ENCODE measurements at regions of chr1 and their contacts with region 1.

Region 1: GRCh38 chr1:151611832-151612500 is at the start of gene SNX27:
- DNase-seq: peak; percentile 81
- ATAC-seq: peak; percentile 96
- H3K4me3 Mint-ChIP-seq: peak within 1 kb of the TSS; percentile 95
- H3K27ac Mint-ChIP-seq: peak within 1 kb of the TSS; percentile 79
- H3K4me1 Mint-ChIP-seq: peaks cover 32% of the 10 kb centered on the region
- H3K27me3 Mint-ChIP-seq: peaks cover 9% of the 10 kb centered on the region
- CTCF ChIP-seq: no peak
- total RNA-seq, gene SNX27: 22.2 and 27.6 TPM in 2 replicates

Region 2: DNA sequence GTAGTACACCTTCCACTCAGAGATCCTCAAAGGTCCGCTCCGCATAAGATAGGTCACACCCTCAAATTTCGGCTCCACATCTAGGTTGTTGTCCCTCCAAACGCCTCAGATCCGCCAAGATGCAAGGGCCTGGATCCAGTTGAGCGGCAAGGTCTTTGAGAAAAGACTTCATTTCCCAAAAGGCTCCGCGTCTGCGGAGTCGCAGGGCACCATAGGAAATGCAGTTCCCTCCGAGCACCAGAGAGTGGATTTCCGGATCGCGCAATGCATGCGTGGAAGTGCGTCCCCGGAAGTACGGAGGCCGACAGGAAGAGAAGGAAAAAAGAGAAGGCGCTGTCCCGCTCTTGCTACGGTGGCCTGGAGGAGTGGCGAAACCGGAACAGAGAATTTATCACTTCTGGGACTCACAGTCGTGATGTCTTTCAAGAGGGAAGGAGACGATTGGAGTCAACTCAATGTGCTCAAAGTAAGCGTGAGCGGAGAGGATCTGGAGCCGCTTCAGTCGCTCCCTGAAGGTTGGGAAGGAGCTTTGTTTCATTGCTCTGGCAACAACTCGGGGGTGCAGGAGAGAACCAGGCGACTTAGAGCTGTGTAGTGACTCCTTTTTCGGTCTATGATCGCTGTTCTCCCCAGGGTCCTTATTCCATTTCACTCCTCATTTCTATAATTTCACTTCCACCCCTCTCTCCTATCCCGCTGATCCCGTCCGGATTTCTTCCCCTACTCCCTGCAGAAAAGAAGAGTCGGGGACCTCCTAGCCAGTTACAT is 446.0 kb before region 1 on chr1 and contains the starts of genes LYSMD1 and SCNM1:
- CTCF ChIA-PET with region 1: no interaction called
- POLR2A ChIA-PET with region 1: no interaction called
- intact Hi-C with region 1: loop called (anchors 10 kb)
- DNase-seq: peak; percentile 87
- ATAC-seq: peak; percentile 96
- H3K4me3 Mint-ChIP-seq: peak within 1 kb of the TSS; percentile 92
- H3K27ac Mint-ChIP-seq: peak within 1 kb of the TSS; percentile 89
- H3K4me1 Mint-ChIP-seq: peaks cover 37% of the 10 kb centered on the region
- H3K27me3 Mint-ChIP-seq: no peaks in the 10 kb centered on the region
- CTCF ChIP-seq: no peak
- total RNA-seq, gene LYSMD1: 4.9 and 5.4 TPM in 2 replicates
- total RNA-seq, gene SCNM1: 52.8 and 58.2 TPM in 2 replicates

Region 3: GRCh38 chr1:151485685-151486255 is 126.2 kb before region 1 on chr1:
- CTCF ChIA-PET with region 1: no interaction called
- POLR2A ChIA-PET with region 1: no interaction called
- intact Hi-C with region 1: no loop called
- DNase-seq: no peak
- ATAC-seq: no peak
- H3K4me3 Mint-ChIP-seq: no peak overlapping the region
- H3K27ac Mint-ChIP-seq: no peak overlapping the region
- H3K4me1 Mint-ChIP-seq: no peaks in the 10 kb centered on the region
- H3K27me3 Mint-ChIP-seq: no peaks in the 10 kb centered on the region
- CTCF ChIP-seq: no peak

Region 4: GRCh38 chr1:151539990-151540981 is 71.7 kb before region 1 on chr1 and contains the start of gene TUFT1:
- CTCF ChIA-PET with region 1: no interaction called
- POLR2A ChIA-PET with region 1: no interaction called
- intact Hi-C with region 1: loop called (anchors 1 kb)
- DNase-seq: peak; percentile 94
- ATAC-seq: peak; percentile 99
- H3K4me3 Mint-ChIP-seq: peak within 1 kb of the TSS; percentile 93
- H3K27ac Mint-ChIP-seq: peak within 1 kb of the TSS; percentile 78
- H3K4me1 Mint-ChIP-seq: peaks cover 24% of the 10 kb centered on the region
- H3K27me3 Mint-ChIP-seq: peaks cover 5% of the 10 kb centered on the region
- CTCF ChIP-seq: no peak
- total RNA-seq, gene TUFT1: 2.3 and 2.4 TPM in 2 replicates

Region 5: GRCh38 chr1:151762941-151763921 is 151.3 kb after region 1 on chr1 and contains the start of gene MRPL9:
- CTCF ChIA-PET with region 1: no interaction called
- POLR2A ChIA-PET with region 1: no interaction called
- intact Hi-C with region 1: loop called (anchors 1 kb)
- DNase-seq: peak; percentile 80
- ATAC-seq: peak; percentile 99
- H3K4me3 Mint-ChIP-seq: peak within 1 kb of the TSS; percentile 92
- H3K27ac Mint-ChIP-seq: peak within 1 kb of the TSS; percentile 91
- H3K4me1 Mint-ChIP-seq: peaks cover 20% of the 10 kb centered on the region
- H3K27me3 Mint-ChIP-seq: no peaks in the 10 kb centered on the region
- CTCF ChIP-seq: no peak
- total RNA-seq, gene MRPL9: 96.2 and 105 TPM in 2 replicates

Region 6: GRCh38 chr1:151909150-151910149 is 297.5 kb after region 1 on chr1 and contains the start of gene THEM4:
- CTCF ChIA-PET with region 1: no interaction called
- POLR2A ChIA-PET with region 1: no interaction called
- intact Hi-C with region 1: loop called (anchors 5 kb)
- DNase-seq: peak; percentile 93
- ATAC-seq: peak; percentile 99
- H3K4me3 Mint-ChIP-seq: peak within 1 kb of the TSS; percentile 90
- H3K27ac Mint-ChIP-seq: peak within 1 kb of the TSS; percentile 92
- H3K4me1 Mint-ChIP-seq: peaks cover 16% of the 10 kb centered on the region
- H3K27me3 Mint-ChIP-seq: no peaks in the 10 kb centered on the region
- CTCF ChIP-seq: no peak
- total RNA-seq, gene THEM4: 20.4 and 22.8 TPM in 2 replicates